ENCODE measurements at regions of chr1 and their contacts with region 1.

Region 1: DNA sequence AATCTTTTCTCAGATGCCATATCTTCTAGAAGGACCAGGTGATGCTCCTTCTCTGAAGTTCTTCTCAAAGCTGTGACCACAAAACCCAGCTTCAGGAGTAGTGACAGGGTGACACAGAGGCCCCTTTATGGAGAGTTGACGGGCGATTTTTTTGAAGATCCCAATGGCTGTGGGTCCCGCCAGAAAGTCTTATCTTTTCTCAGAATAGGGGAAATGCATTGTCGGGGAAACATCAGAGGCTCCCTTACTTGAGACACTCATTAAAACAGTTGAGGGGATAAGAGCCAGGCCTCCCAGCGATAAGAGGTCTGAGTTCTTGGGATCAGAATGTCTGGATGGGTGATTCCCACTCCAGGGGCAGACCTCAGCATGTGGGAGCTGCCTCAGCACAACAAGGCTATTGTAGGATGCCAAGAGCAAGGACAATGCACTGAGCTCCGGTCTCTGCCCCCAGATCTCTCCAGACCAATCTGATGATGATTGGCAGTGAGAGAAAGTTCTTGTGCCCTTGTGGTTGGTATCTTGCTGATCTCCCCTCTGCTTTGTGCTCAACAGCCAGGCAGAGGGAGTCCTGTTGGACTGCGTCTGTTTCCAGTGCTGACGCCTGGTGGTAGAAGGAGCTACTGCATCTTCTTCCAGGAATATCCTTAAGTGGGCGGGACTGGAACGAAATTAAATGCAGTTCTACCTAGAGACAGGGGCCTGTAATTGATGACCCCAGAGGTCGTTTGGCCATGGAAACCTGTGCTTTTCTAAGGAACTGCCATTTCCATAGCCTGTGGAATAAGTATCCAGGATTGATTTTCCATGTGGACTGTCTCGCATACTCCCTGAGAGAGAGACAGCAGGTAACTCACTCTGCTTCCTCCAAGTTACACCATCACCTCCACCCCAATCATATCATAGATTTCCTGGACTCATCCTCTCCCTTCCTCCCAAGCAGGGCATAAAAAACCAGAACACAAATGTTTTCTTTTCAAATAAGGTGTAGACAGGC is 6.8 kb upstream of the ACKR1 start:
- H3K4me3 ChIP-seq: no peak overlapping the region
- H3K27ac ChIP-seq: no peak overlapping the region
- H3K4me1 ChIP-seq: no peaks in the 10 kb centered on the region
- CTCF ChIP-seq: peak; percentile 43; the same call in 1 of the 2 replicates

Region 2: GRCh38 chr1:158951956-158952355 is 245.9 kb before region 1 on chr1:
- CTCF ChIA-PET with region 1: no interaction called
- POLR2A ChIA-PET with region 1: no interaction called
- H3K4me3 ChIP-seq: no peak overlapping the region
- H3K27ac ChIP-seq: no peak overlapping the region
- H3K4me1 ChIP-seq: no peaks in the 10 kb centered on the region
- CTCF ChIP-seq: no peak

Region 3: DNA sequence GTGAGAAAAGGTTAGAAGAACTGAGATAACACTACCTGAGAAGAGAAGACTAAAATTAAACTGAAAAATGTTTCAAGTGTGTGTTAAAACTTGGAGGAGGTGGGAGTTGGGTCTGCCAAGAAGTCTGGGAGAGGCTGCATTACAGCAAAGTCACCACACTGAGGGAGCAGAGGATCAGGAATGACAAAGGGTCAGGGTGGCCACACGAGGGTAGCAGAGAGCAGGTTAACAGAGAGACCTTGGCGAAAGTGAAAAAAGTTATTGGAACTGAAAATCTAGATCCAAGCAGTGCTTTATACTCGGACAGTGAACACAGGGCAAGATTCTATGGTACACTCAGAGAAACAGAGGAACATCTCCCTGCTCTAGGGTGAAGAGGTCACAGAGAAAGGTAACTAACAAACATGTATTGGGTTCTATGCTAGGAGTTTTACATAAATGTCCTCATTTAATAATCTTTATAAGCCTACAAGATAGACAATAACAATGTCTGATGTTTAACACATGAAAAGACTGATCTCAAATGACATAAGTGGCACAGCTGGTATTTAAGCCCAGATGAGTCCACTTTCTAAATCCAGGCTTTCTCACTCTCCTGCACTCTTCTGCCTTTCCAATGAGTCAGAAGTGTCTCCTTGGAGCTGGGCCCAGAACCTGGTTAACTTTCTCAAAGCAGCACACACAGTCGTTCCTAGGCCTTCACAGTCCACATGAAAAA is 36.7 kb before region 1 on chr1:
- CTCF ChIA-PET with region 1: interaction called, 69 read pairs
- POLR2A ChIA-PET with region 1: no interaction called
- H3K4me3 ChIP-seq: no peak overlapping the region
- H3K27ac ChIP-seq: no peak overlapping the region
- H3K4me1 ChIP-seq: no peaks in the 10 kb centered on the region
- CTCF ChIP-seq: peak; percentile 97

Region 4: GRCh38 chr1:159184201-159184600 is 13.7 kb before region 1 on chr1:
- CTCF ChIA-PET with region 1: interaction called, 13 read pairs
- POLR2A ChIA-PET with region 1: no interaction called
- H3K4me3 ChIP-seq: no peak overlapping the region
- H3K27ac ChIP-seq: no peak overlapping the region
- H3K4me1 ChIP-seq: no peaks in the 10 kb centered on the region
- CTCF ChIP-seq: no peak

Region 5: GRCh38 chr1:159266832-159267231 is 69.0 kb after region 1 on chr1:
- CTCF ChIA-PET with region 1: no interaction called
- POLR2A ChIA-PET with region 1: no interaction called
- H3K4me3 ChIP-seq: no peak overlapping the region
- H3K27ac ChIP-seq: no peak overlapping the region
- H3K4me1 ChIP-seq: no peaks in the 10 kb centered on the region
- CTCF ChIP-seq: no peak